ENCODE measurements at regions of chr3 and their contacts with region 1.

Region 1: DNA sequence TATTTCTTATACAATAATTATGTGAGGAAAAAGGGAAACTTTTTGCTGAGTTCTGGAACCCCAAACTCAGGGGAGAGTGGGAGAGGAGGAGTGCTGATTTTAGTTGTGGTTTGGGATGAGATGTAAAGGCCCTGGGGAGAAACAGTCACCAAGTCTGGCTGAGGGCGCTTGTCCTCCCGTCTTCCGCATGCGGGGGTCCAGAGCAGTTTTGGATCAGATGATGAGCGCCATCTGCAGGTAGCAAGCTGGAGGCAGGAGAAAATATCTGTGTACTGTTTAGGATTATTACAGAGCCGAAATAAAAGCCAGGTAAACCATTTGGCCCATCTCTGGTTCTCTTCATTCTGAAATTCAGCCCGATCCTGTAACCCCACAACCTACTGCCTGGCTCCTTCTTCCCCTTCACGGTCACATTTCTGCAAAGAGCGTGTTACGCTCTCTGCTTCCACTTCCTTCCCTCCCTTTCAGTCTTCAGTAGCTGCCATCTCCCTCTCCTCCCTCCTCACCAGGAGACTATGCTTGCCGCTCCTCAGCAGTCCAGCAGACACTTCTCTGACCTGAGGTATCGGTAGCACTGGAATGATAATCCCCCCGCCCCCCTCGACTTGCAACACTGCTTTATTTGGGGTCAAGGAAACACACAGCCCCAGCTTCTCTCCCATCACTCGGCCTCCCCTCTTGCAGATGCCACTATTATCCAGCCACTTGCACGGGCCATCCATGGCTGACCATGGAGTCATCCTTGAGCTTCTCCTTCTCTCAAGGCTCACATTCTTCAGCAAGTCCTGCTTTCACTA is 1.4 kb upstream of the PARP14 start:
- DNase-seq: peak; percentile 43 to 85 (median 54)
- ATAC-seq: peak; percentile 83
- H3K4me3 ChIP-seq: peak overlapping the region; percentile 77
- H3K27ac ChIP-seq: peak overlapping the region; percentile 80
- H3K4me1 ChIP-seq: peaks cover 13 to 17% of the 10 kb centered on the region in 2 experiments; a peak in 4 of 5 replicates
- H3K27me3 ChIP-seq: no peaks in the 10 kb centered on the region
- CTCF ChIP-seq: peak; percentile 76 to 84 (median 80)
- EP300 ChIP-seq: no peak
- POLR2A ChIP-seq: no peak
- RAD21 ChIP-seq: peak; percentile 81 to 85

Region 2: GRCh38 chr3:122383771-122384697 is 295.2 kb before region 1 on chr3 and contains the start of gene FAM162A:
- CTCF ChIA-PET with region 1: interaction called, 3 read pairs
- POLR2A ChIA-PET with region 1: interaction called, 10 read pairs
- in situ Hi-C with region 1: no loop called
- intact Hi-C with region 1: no loop called
- DNase-seq: peak; percentile 77 to 94 (median 81)
- ATAC-seq: peak; percentile 98
- H3K4me3 ChIP-seq: peak within 1 kb of the TSS; percentile 97
- H3K27ac ChIP-seq: peak within 1 kb of the TSS; percentile 73
- H3K4me1 ChIP-seq: peaks cover 0 to 6% of the 10 kb centered on the region in 2 experiments; a peak in 2 of 5 replicates
- H3K27me3 ChIP-seq: no peaks in the 10 kb centered on the region
- CTCF ChIP-seq: peak; percentile 62 to 82 (median 65)
- EP300 ChIP-seq: no peak
- POLR2A ChIP-seq: peak; percentile 76
- RAD21 ChIP-seq: peak; percentile 29 to 32; a peak in 2 of 4 replicates
- polyA plus RNA-seq, gene FAM162A: 208 to 211 TPM

Region 3: DNA sequence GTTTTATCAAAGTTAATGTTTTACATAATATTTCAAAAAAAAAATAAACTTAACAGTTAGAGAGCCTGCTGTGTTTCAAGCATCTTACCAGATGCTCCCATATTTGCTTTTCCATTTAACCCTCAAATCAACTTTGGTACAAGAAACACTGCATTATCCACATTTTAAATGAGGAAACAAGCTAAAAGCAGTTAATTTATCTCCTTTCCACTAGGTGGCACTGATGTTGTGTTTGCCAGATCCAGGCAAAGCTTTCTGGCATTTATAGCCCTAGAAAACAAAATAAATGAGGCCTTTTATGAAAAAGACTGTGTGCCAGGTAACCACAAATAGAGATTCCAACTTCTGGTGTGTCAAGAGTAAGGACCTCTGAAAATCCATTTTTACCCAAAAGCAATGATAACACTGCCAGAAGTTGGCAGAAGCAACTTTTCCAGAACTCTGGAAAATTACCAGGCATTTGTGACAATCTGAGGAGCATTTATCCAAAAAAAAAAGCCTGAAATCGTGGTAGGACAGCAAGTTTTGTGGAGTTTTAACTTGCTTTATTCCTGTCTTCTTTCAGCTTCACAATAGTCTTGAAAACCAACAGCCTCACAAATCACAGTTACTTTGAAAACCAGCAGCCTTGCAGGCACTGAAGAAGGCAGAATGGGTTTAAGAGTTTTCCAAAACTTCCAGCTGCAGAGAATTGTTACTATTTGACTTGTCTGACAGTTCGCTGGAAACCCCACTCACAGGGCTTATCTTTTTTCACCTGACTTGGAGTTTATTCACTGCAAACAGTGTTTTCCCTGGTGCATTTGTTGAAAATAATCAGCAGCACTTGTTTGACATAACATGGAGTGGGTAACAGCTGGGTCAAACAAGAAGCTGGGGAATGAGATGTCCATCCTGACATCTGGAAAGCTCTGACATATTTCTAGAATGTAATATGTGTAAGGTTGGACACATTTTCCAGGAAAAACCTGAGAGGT is 286.1 kb before region 1 on chr3:
- CTCF ChIA-PET with region 1: no interaction called
- POLR2A ChIA-PET with region 1: no interaction called
- in situ Hi-C with region 1: loop called (anchors 10 kb)
- intact Hi-C with region 1: loop called (anchors 2 kb)
- DNase-seq: peak; percentile 12 to 43 (median 14)
- ATAC-seq: peak; percentile 44; the same call in 1 of the 3 replicates
- H3K4me3 ChIP-seq: no peak overlapping the region
- H3K27ac ChIP-seq: no peak overlapping the region
- H3K4me1 ChIP-seq: peaks cover 0 to 6% of the 10 kb centered on the region in 2 experiments; a peak in 2 of 5 replicates
- H3K27me3 ChIP-seq: no peaks in the 10 kb centered on the region
- CTCF ChIP-seq: peak; percentile 34 to 65 (median 59); a peak in 4 of 6 replicates
- EP300 ChIP-seq: no peak
- POLR2A ChIP-seq: no peak
- RAD21 ChIP-seq: peak; percentile 64 to 75

Region 4: GRCh38 chr3:122458992-122459391 is 220.3 kb before region 1 on chr3:
- CTCF ChIA-PET with region 1: interaction called, 4 read pairs
- POLR2A ChIA-PET with region 1: no interaction called
- in situ Hi-C with region 1: no loop called
- intact Hi-C with region 1: loop called (anchors 1 kb)
- DNase-seq: peak in 1 of 4 experiments; percentile 15
- ATAC-seq: no peak
- H3K4me3 ChIP-seq: no peak overlapping the region
- H3K27ac ChIP-seq: no peak overlapping the region
- H3K4me1 ChIP-seq: no peaks in the 10 kb centered on the region
- H3K27me3 ChIP-seq: no peaks in the 10 kb centered on the region
- CTCF ChIP-seq: peak in 2 of 3 experiments; percentile 22 to 55; a peak in 3 of 6 replicates
- EP300 ChIP-seq: no peak
- POLR2A ChIP-seq: no peak
- RAD21 ChIP-seq: peak; percentile 32 to 62; a peak in 3 of 4 replicates

Region 5: GRCh38 chr3:122523317-122523716 is 156.0 kb before region 1 on chr3:
- CTCF ChIA-PET with region 1: no interaction called
- POLR2A ChIA-PET with region 1: no interaction called
- in situ Hi-C with region 1: no loop called
- intact Hi-C with region 1: no loop called
- DNase-seq: no peak
- ATAC-seq: peak; percentile 64; the same call in 2 of the 3 replicates
- H3K4me3 ChIP-seq: no peak overlapping the region
- H3K27ac ChIP-seq: no peak overlapping the region
- H3K4me1 ChIP-seq: no peaks in the 10 kb centered on the region
- H3K27me3 ChIP-seq: no peaks in the 10 kb centered on the region
- CTCF ChIP-seq: no peak
- EP300 ChIP-seq: no peak
- POLR2A ChIP-seq: no peak
- RAD21 ChIP-seq: no peak

Region 6: GRCh38 chr3:122665226-122665786 is 14.0 kb before region 1 on chr3:
- CTCF ChIA-PET with region 1: no interaction called
- POLR2A ChIA-PET with region 1: no interaction called
- in situ Hi-C with region 1: no loop called
- intact Hi-C with region 1: no loop called
- DNase-seq: no peak
- ATAC-seq: no peak
- H3K4me3 ChIP-seq: no peak overlapping the region
- H3K27ac ChIP-seq: no peak overlapping the region
- H3K4me1 ChIP-seq: no peaks in the 10 kb centered on the region; a peak in 1 of 5 replicates
- H3K27me3 ChIP-seq: no peaks in the 10 kb centered on the region
- CTCF ChIP-seq: no peak
- EP300 ChIP-seq: no peak
- POLR2A ChIP-seq: no peak
- RAD21 ChIP-seq: no peak

Measured in K562 (cell line).